MCF 10A (cell line): ENCODE measurements at regions of chr14 and their contacts with region 1.

Region 1: GRCh38 chr14:58427281-58428117 is at the starts of genes KIAA0586 and TIMM9:
- DNase-seq: peak; percentile 99
- H3K4me3 Mint-ChIP-seq: peak within 1 kb of the TSS; percentile 85
- H3K27ac Mint-ChIP-seq: peak within 1 kb of the TSS; percentile 96
- H3K4me1 Mint-ChIP-seq: peaks cover 22% of the 10 kb centered on the region
- H3K27me3 Mint-ChIP-seq: no peaks in the 10 kb centered on the region
- CTCF ChIP-seq: no peak
- total RNA-seq, gene KIAA0586: 19.6 and 26.2 TPM in 2 replicates
- total RNA-seq, gene TIMM9: 52.8 and 102 TPM in 2 replicates

Region 2: GRCh38 chr14:58395812-58396788 is 31.4 kb before region 1 on chr14 and contains the start of gene TOMM20L:
- CTCF ChIA-PET with region 1: interaction called, 3 read pairs
- POLR2A ChIA-PET with region 1: interaction called, 10 read pairs
- intact Hi-C with region 1: no loop called
- DNase-seq: peak; percentile 45
- H3K4me3 Mint-ChIP-seq: peak within 1 kb of the TSS; percentile 64
- H3K27ac Mint-ChIP-seq: no peak within 1 kb of the TSS
- H3K4me1 Mint-ChIP-seq: no peaks in the 10 kb centered on the region
- H3K27me3 Mint-ChIP-seq: no peaks in the 10 kb centered on the region
- CTCF ChIP-seq: peak; percentile 68
- total RNA-seq, gene TOMM20L: not detected in 2 replicates

Region 3: GRCh38 chr14:58439476-58439875 is 12.0 kb after region 1 on chr14:
- CTCF ChIA-PET with region 1: interaction called, 3 read pairs
- POLR2A ChIA-PET with region 1: interaction called, 16 read pairs
- intact Hi-C with region 1: no loop called
- DNase-seq: no peak
- H3K4me3 Mint-ChIP-seq: no peak overlapping the region
- H3K27ac Mint-ChIP-seq: no peak overlapping the region
- H3K4me1 Mint-ChIP-seq: no peaks in the 10 kb centered on the region
- H3K27me3 Mint-ChIP-seq: no peaks in the 10 kb centered on the region
- CTCF ChIP-seq: no peak

Region 4: GRCh38 chr14:58455587-58456228 is 28.2 kb after region 1 on chr14:
- CTCF ChIA-PET with region 1: interaction called, 3 read pairs
- POLR2A ChIA-PET with region 1: interaction called, 20 read pairs
- intact Hi-C with region 1: no loop called
- DNase-seq: peak; percentile 80
- H3K4me3 Mint-ChIP-seq: peak overlapping the region; percentile 47
- H3K27ac Mint-ChIP-seq: peak overlapping the region; percentile 87
- H3K4me1 Mint-ChIP-seq: peaks cover 13% of the 10 kb centered on the region
- H3K27me3 Mint-ChIP-seq: no peaks in the 10 kb centered on the region
- CTCF ChIP-seq: no peak